Right ventricle myocardium inferior (tissue), 1 donor: ENCODE measurements at regions of chr5 and their contacts with region 1.

Region 1: GRCh38 chr5:36521838-36522745 is 84.3 kb upstream of the SLC1A3 start:
- DNase-seq: no peak
- ATAC-seq: peak; percentile 90

Region 2: DNA sequence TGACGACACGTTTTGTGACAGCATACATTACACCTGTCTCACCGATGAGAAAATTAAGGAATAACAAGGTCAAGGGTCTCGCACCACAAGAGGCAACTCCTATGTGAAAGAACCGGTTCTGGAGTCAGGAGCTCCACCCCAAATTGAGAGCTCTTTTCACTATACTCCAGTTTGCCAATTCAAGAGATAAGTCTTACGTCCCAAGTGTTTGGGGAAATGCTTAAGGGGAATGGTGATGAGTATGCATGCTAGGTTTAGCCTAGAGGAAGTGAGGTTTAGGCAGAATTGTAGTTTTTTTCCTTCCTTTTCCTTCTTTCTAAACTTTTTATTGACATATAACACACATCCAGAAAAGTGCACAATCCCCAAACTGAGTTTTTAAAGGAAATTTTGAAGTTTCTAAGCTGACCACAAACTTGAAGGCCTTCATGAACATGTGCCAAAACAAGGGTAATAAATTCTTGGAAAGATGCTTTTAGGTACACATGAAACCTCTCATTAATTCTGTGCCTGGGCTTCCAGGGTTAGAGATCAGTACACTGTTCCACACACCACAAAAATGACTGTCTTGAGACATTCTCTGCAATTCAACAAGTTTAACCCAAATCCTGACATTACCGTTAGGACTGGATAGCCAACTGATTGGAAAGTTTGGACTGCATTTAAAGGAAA is 43.3 kb before region 1 on chr5:
- intact Hi-C with region 1: no loop called
- DNase-seq: no peak
- ATAC-seq: no peak

Region 3: GRCh38 chr5:36573441-36573840 is 51.3 kb after region 1 on chr5:
- intact Hi-C with region 1: loop called (anchors 5 kb)
- DNase-seq: no peak
- ATAC-seq: no peak